ENCODE measurements at regions of chr4 and their contacts with region 1.

Region 1: DNA sequence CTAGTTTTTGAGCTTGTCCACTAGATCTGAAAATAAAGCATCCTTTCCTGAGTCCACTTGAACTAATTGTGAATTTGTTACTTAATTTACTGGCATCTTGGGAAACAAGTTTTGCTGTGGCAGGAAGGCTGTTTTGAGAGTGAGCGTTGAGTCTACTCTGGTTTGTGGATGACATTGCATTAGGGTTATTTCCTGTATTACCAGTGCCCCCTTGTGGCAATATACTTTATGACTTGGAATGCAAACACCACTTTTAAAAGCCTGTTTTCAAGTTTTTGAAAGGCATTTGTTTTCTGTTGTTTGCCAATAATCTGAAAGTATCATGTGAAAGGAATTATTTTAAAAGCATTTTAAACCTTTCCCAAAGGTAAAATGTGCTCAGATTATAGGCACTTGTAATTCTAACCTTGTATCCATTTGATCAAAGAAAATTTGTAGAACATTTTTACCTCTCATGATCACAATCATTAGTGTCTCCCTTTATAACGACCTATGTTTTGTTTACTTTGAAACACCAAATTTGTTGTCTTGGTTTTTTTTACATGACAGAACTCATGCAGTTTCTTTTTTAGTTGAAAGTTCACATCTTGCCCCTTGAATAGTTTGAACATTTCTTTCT is 18.0 kb upstream of the CYP2U1 start:
- DNase-seq: peak in 3 of 6 donors; percentile 18 to 42 (median 23)
- ATAC-seq: peak; percentile 73 to 97 (median 92)
- H3K4me3 ChIP-seq: no peak overlapping the region
- H3K27ac ChIP-seq: no peak overlapping the region
- H3K4me1 ChIP-seq: peaks cover 0 to 3% (median 0%) of the 10 kb centered on the region in 3 donors
- H3K27me3 ChIP-seq: no peaks in the 10 kb centered on the region
- CTCF ChIP-seq: peak; percentile 54 to 74 (median 64)

Region 2: DNA sequence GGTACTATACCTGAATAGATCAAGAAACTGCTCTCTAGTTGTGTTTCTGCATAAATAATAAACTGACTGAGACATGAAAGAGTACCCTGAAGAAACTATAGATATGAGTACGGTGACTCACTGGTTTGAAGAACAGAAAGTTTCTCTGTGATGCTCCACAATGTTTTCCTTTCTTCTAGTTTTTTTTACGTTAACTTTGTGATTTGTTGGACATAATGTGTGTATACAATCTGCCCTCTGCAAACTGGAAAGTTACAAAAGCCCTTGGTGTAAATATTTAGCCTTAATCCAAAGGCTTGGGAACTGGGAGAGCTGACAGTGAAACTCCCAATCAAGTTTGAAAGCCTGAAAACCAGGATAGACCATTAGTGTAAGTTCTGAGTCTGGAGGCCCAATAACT is 161.7 kb before region 1 on chr4:
- intact Hi-C with region 1: loop called (anchors 5 to 10 kb)
- DNase-seq: no peak
- ATAC-seq: no peak
- H3K4me3 ChIP-seq: no peak overlapping the region
- H3K27ac ChIP-seq: no peak overlapping the region
- H3K4me1 ChIP-seq: no peaks in the 10 kb centered on the region
- H3K27me3 ChIP-seq: no peaks in the 10 kb centered on the region
- CTCF ChIP-seq: no peak

Region 3: DNA sequence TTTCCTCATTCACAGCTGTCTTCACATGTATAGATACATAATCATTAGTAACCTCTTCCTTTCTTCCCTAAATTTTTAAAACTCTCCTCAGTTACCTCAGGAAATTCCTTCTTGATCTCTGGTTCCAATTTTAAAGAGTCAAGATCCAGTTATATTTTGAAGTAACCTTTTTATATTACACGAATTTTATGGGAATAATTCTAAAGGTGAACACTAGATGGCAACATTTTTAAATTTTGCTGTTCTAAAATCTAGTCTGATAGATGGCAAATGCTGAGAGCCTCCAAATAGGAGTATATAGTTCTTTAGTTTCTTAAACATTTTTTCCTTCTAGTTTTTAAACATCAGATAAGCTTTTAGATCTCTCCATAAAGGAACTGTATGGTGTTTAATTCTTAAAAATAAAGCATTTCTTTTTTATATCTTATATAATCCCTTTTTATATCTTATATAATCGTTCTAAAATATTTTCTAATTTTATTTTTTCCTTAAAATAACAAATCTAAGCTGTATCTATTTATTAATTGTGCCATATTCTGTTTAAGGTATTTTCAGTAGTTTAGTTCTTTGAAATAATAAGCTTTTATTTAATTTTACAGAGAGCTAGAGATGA is 155.4 kb before region 1 on chr4:
- intact Hi-C with region 1: loop called (anchors 5 to 10 kb)
- DNase-seq: no peak
- ATAC-seq: peak in 3 of 4 donors; percentile 60 to 70 (median 68)
- H3K4me3 ChIP-seq: no peak overlapping the region
- H3K27ac ChIP-seq: no peak overlapping the region
- H3K4me1 ChIP-seq: no peaks in the 10 kb centered on the region
- H3K27me3 ChIP-seq: no peaks in the 10 kb centered on the region
- CTCF ChIP-seq: peak; percentile 24 to 53 (median 36)

Region 4: GRCh38 chr4:107774681-107775080 is 138.7 kb before region 1 on chr4:
- intact Hi-C with region 1: no loop called
- DNase-seq: no peak
- ATAC-seq: no peak
- H3K4me3 ChIP-seq: no peak overlapping the region
- H3K27ac ChIP-seq: no peak overlapping the region
- H3K4me1 ChIP-seq: no peaks in the 10 kb centered on the region
- H3K27me3 ChIP-seq: no peaks in the 10 kb centered on the region
- CTCF ChIP-seq: no peak